Endothelial cell of umbilical vein (primary cell): ENCODE measurements at regions of chr2 and their contacts with region 1.

Region 1: GRCh38 chr2:205563646-205564045 is 118.7 kb upstream of the NRP2 start:
- DNase-seq: no peak
- H3K4me3 ChIP-seq: no peak overlapping the region
- H3K27ac ChIP-seq: no peak overlapping the region
- H3K4me1 ChIP-seq: no peaks in the 10 kb centered on the region
- H3K27me3 ChIP-seq: no peaks in the 10 kb centered on the region
- CTCF ChIP-seq: peak; percentile 41 to 42
- POLR2A ChIP-seq: no peak

Region 2: GRCh38 chr2:205086662-205087061 is 477.0 kb before region 1 on chr2:
- CTCF ChIA-PET with region 1: no interaction called
- POLR2A ChIA-PET with region 1: no interaction called
- dilution Hi-C with region 1: no loop called
- intact Hi-C with region 1: no loop called
- DNase-seq: no peak
- H3K4me3 ChIP-seq: no peak overlapping the region
- H3K27ac ChIP-seq: no peak overlapping the region
- H3K4me1 ChIP-seq: no peaks in the 10 kb centered on the region
- H3K27me3 ChIP-seq: no peaks in the 10 kb centered on the region
- CTCF ChIP-seq: no peak
- POLR2A ChIP-seq: no peak

Region 3: DNA sequence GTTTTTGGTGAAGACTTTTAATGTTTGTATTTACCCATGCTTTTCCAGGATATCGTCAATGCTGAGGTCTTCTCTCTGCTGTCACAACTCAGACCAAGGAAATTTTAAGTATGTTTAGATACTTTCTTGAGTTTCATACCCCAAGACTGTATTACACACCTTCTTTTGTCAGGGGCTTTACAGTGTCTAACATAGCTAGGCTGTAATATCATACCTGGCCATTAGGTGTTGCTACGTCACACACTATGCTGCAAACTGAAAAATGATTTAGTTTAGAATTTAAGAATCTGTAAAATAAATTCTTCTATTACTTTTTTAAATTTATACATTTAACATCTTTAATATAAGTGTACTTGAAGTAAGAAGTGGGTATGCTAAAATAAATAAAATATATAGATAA is 239.7 kb before region 1 on chr2:
- CTCF ChIA-PET with region 1: no interaction called
- POLR2A ChIA-PET with region 1: no interaction called
- dilution Hi-C with region 1: no loop called
- intact Hi-C with region 1: loop called (anchors 10 kb)
- DNase-seq: no peak
- H3K4me3 ChIP-seq: no peak overlapping the region
- H3K27ac ChIP-seq: no peak overlapping the region
- H3K4me1 ChIP-seq: no peaks in the 10 kb centered on the region
- H3K27me3 ChIP-seq: no peaks in the 10 kb centered on the region
- CTCF ChIP-seq: no peak
- POLR2A ChIP-seq: no peak

Region 4: GRCh38 chr2:206011795-206012194 is 448.1 kb after region 1 on chr2:
- CTCF ChIA-PET with region 1: no interaction called
- POLR2A ChIA-PET with region 1: no interaction called
- dilution Hi-C with region 1: no loop called
- intact Hi-C with region 1: no loop called
- DNase-seq: peak; percentile 26
- H3K4me3 ChIP-seq: no peak overlapping the region
- H3K27ac ChIP-seq: no peak overlapping the region
- H3K4me1 ChIP-seq: no peaks in the 10 kb centered on the region
- H3K27me3 ChIP-seq: no peaks in the 10 kb centered on the region
- CTCF ChIP-seq: no peak
- POLR2A ChIP-seq: no peak